Pancreas (tissue), 10 donors: ENCODE measurements at regions of chr11 and their contacts with region 1.

Region 1: GRCh38 chr11:31809857-31810778 is 1.0 kb downstream of the PAX6 start:
- DNase-seq: peak in 3 of 6 donors; percentile 34 to 81 (median 78)
- ATAC-seq: peak; percentile 6 to 59 (median 38)
- H3K4me3 ChIP-seq: peak overlapping the region; percentile 23 to 59 (median 32)
- H3K27ac ChIP-seq: no peak overlapping the region
- H3K4me1 ChIP-seq: peaks cover 4 to 26% (median 8%) of the 10 kb centered on the region in 3 donors
- H3K27me3 ChIP-seq: peaks cover 13 to 75% (median 31%) of the 10 kb centered on the region in 4 donors
- CTCF ChIP-seq: no peak

Region 2: GRCh38 chr11:31747581-31747980 is 62.5 kb before region 1 on chr11:
- intact Hi-C with region 1: loop called in 1 of 3 experiments (anchors 10 kb)
- DNase-seq: no peak
- ATAC-seq: no peak
- H3K4me3 ChIP-seq: no peak overlapping the region
- H3K27ac ChIP-seq: no peak overlapping the region
- H3K4me1 ChIP-seq: no peaks in the 10 kb centered on the region
- H3K27me3 ChIP-seq: no peaks in the 10 kb centered on the region
- CTCF ChIP-seq: no peak